ENCODE measurements at regions of chr1 and their contacts with region 1.

Region 1: GRCh38 chr1:156500797-156501499 is 373 bp upstream of the MEF2D start:
- DNase-seq: peak; percentile 96 to 97 (median 96)
- ATAC-seq: peak; percentile 56 to 90 (median 76)
- H3K4me3 ChIP-seq: peak overlapping the region; percentile 69 to 100 (median 95)
- H3K27ac ChIP-seq: peak overlapping the region; percentile 98 to 100 (median 100)
- H3K4me1 ChIP-seq: peaks cover 35 to 76% (median 70%) of the 10 kb centered on the region in 12 donors
- H3K27me3 ChIP-seq: no peaks in the 10 kb centered on the region
- CTCF ChIP-seq: peak; percentile 31 to 76 (median 58)
- POLR2A ChIP-seq: peak; percentile 12 to 82

Region 2: DNA sequence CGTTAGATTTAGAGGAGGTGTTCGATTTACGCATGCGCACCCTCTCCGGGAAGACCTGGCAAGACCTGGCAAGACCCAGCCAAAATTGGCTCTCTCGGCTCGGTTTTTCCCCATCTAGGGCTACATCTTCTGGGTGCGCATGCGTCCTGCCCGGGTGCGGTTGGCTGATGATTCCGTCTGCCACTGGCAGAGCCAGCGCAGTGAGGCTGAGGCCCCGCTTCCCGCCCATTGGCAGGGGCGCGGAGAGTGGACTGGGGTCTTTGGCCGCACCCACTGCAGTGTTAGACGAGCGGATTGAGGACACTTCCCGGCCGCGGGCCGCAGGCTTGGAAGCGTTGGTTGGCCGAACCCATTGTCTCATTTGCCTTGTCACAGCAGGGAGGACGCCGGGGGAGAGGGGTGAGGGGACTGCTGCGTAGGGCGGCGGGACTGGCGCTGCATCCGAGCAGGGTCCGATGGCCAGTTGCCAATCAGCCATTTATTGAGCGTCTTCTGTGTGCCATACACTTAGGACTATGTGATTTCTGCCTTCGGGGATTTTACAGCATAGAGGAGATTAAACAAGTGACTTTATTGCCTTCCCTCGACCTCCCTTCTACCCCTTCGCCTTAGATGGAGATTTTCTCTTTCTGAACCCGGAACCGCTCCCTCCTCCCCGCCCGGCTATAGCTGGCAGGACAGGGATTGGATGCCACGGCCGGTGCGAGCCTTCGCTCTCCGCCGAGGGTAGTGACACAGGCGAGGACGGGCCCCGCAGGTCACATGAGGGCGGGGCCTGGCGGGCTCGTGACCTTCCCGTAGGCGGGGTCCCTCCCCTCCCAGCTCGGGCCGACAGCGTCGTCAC is 44.1 kb before region 1 on chr1:
- intact Hi-C with region 1: loop called (anchors 1 to 5 kb)
- DNase-seq: peak; percentile 97 to 99 (median 98)
- ATAC-seq: peak; percentile 94 to 96 (median 95)
- H3K4me3 ChIP-seq: peak overlapping the region; percentile 42 to 73 (median 62)
- H3K27ac ChIP-seq: peak overlapping the region; percentile 98 to 100 (median 98)
- H3K4me1 ChIP-seq: peaks cover 0 to 30% (median 6%) of the 10 kb centered on the region in 12 donors
- H3K27me3 ChIP-seq: no peaks in the 10 kb centered on the region
- CTCF ChIP-seq: no peak
- POLR2A ChIP-seq: peak; percentile 35 to 71

Region 3: GRCh38 chr1:156480411-156481192 is 20.3 kb before region 1 on chr1:
- intact Hi-C with region 1: loop called in 1 of 10 experiments (anchors 2 kb)
- DNase-seq: peak; percentile 66 to 86 (median 74)
- ATAC-seq: peak in 3 of 4 donors; percentile 4 to 48 (median 22)
- H3K4me3 ChIP-seq: no peak overlapping the region
- H3K27ac ChIP-seq: peak overlapping the region; percentile 9 to 89 (median 49)
- H3K4me1 ChIP-seq: peaks cover 7 to 98% (median 80%) of the 10 kb centered on the region in 12 donors
- H3K27me3 ChIP-seq: no peaks in the 10 kb centered on the region
- CTCF ChIP-seq: peak; percentile 56 to 78 (median 63)
- POLR2A ChIP-seq: no peak

Region 4: DNA sequence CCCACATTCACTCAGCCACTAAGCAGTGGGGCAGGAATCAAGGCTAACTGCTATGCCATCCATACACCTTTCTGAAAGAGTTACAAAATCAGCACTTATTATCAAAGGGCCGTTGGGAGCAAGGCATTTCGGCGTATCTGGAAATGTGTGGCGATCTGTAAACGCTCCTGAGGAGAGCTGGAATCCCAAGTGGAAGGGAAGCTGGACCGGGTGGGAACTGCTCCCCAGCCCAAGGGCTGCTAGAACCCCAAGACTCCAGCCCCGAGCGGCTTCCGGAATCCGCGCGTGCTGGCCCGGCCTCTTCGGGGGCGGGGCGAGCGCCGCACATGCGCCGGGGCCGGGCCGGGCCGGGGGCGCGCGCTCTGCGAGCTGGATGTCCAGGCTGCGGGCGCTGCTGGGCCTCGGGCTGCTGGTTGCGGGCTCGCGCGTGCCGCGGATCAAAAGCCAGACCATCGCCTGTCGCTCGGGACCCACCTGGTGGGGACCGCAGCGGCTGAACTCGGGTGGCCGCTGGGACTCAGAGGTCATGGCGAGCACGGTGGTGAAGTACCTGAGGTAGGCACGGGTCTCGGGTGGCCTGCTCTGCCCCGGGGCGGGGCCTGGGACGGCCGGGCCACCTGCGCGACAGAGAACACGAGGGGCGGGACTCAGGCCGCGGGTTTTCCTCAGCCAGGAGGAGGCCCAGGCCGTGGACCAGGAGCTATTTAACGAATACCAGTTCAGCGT is 90.6 kb after region 1 on chr1 and contains the start of gene NAXE:
- intact Hi-C with region 1: loop called in 3 of 10 experiments (anchors 5 kb)
- DNase-seq: peak; percentile 78 to 89 (median 80)
- ATAC-seq: peak; percentile 80 to 97 (median 94)
- H3K4me3 ChIP-seq: peak within 1 kb of the TSS; percentile 75 to 97 (median 89)
- H3K27ac ChIP-seq: peak within 1 kb of the TSS; percentile 76 to 94 (median 86)
- H3K4me1 ChIP-seq: peaks cover 0 to 17% (median 12%) of the 10 kb centered on the region in 12 donors
- H3K27me3 ChIP-seq: no peaks in the 10 kb centered on the region
- CTCF ChIP-seq: no peak
- POLR2A ChIP-seq: peak in 1 of 2 donors; percentile 66
- total RNA-seq, gene NAXE: 87.4 to 141 (median 111) TPM

Region 5: DNA sequence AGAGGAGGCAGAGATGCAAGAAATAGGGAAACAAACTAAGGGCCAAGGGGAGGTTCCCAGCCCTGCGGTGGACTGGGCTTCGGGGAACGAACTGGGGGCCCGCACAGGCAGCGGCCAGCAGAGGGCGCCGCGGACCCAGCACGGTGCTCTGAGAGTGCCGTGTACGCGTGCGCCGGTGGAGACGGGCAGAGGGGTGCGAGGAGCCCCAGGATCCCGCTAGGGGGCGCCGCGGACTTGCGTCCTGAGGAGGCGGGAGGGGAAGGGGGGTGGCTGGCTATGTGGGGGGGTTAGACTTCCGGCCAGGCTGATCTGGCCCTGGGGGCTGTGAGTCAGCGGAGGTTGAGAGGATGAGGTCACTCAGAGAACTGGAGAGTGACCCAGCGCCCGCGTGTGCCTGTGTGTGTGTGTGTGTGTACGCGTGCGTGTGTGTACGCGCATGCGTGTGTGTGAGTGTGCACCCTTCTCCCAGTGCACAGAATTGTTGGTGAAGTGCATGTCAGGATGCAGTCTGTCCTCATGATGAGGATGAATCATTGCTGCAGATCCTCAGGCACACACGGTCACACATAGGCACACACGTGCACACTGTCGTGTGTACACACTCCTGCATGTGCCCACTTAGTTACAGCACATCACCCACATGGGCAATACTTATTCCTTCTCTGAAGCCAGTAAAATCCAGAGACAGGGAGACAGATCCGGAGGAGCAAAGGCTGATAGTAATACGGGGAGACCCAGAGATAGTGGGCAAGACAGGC is 159.2 kb after region 1 on chr1:
- intact Hi-C with region 1: loop called in 5 of 10 experiments (anchors 2 to 10 kb)
- DNase-seq: peak; percentile 97 to 98 (median 98)
- ATAC-seq: peak; percentile 81 to 88 (median 83)
- H3K4me3 ChIP-seq: peak overlapping the region in 10 of 12 donors; percentile 19 to 46 (median 42)
- H3K27ac ChIP-seq: peak overlapping the region; percentile 53 to 99 (median 96)
- H3K4me1 ChIP-seq: peaks cover 26 to 82% (median 69%) of the 10 kb centered on the region in 12 donors
- H3K27me3 ChIP-seq: peaks cover 0 to 21% (median 0%) of the 10 kb centered on the region in 9 donors
- CTCF ChIP-seq: peak; percentile 94 to 100 (median 98)
- POLR2A ChIP-seq: peak in 1 of 2 donors; percentile 33

Region 6: DNA sequence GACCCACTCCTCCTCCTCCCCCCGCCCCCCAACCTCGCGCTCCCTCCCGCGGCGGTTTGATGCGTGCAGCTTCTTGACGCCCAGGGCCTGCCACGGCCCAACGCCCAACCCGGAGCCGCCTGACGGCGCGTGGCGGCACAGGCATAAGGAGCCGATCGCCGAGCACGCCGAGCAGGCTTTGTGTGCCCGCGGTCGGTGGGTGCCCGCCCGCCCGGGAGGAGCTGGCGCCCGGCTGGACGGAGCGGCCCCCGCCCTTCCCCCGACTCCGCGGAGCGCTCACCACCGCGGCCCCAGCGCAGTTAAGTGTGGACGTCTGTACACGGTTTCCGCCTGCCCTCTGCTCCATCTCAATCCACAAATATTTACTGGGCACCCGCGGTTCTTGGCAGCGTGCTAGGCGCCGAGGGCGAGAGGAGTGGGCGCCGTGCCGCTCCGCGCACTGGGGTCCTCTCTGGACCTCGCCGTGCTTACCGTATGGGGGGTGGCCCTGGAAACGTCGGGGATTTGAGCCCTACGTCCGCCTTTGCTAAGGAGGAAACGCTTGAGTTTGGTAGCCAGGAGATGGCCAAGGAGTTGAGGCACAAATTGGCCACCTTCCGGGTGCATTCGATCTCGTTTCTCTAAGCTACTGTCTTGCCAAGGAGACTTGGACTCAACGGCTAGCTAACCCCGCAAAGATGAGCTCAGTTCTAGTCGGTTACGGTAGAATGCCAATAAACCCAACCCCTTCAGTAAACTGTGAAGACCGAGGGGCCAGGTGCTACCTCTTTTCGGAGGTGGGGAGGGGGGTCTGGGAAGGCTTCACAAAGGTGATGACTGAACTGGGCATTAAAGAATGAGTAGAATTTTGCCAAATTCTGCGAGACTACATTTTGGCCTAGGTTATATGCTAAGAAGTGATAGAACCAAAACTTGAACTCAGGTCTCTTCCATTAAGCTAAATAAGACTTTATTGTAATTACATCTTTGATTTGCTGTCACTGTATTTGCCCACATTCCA is 251.1 kb after region 1 on chr1:
- intact Hi-C with region 1: loop called in 1 of 10 experiments (anchors 5 kb)
- DNase-seq: peak; percentile 98 to 99 (median 99)
- ATAC-seq: peak; percentile 72 to 89 (median 82)
- H3K4me3 ChIP-seq: peak overlapping the region; percentile 72 to 100 (median 96)
- H3K27ac ChIP-seq: peak overlapping the region; percentile 96 to 100 (median 99)
- H3K4me1 ChIP-seq: peaks cover 17 to 58% (median 44%) of the 10 kb centered on the region in 12 donors
- H3K27me3 ChIP-seq: no peaks in the 10 kb centered on the region
- CTCF ChIP-seq: peak in 1 of 12 donors; percentile 36
- POLR2A ChIP-seq: peak in 1 of 2 donors; percentile 73

Region 7: DNA sequence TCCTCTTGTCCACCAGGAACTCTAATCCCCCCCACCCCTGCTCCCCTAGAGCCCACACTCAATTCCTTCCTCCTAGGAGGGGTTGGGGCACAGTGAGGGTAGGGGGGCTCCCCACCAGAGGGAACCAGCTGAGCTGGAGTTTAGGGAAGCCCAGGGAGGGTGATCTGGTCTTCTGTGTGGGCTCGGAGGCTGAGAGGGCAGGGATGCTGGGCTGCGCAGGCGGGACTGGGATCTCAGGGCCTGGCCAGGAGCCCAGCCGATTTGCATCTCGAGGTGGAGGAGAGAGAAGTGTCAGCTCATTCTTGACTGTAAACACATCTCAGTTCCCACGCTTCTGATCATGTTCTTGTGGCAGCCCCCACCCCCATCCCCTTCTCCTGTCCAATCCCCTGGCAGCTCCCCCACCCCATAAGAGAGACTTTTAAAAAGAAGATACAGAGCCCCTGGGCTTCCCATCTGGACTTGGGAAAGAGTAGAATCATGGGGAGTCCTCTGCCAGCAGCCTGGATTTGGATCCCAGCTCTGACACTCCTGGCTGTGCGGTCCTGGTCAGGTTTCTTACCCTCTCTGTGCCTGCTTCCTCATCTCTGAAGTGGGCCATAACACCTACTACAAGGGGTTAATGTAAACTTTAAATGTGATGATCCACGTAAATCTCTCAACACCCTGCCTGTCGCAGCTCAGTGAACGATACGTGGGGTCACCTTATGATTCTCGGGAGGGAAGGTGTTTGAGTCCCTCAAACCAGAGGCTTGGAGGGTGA is 399.2 kb after region 1 on chr1:
- intact Hi-C with region 1: no loop called
- DNase-seq: peak in 1 of 5 donors; percentile 63
- ATAC-seq: no peak
- H3K4me3 ChIP-seq: no peak overlapping the region
- H3K27ac ChIP-seq: peak overlapping the region in 4 of 12 donors; percentile 40 to 99 (median 88)
- H3K4me1 ChIP-seq: peaks cover 3 to 100% (median 84%) of the 10 kb centered on the region in 12 donors
- H3K27me3 ChIP-seq: peaks cover 0 to 3% (median 0%) of the 10 kb centered on the region in 9 donors
- CTCF ChIP-seq: no peak
- POLR2A ChIP-seq: no peak